Activated T-helper 1 cell treated with anti-CD3 and anti-CD28 coated beads, Interleukin-12 subunit alpha, Interleukin-12 subunit beta, Interleukin-2, Interleukin-4 antibody, amounts not matched to agents 30 ng/mL and 10 ng/mL and 1 ng/mL, durations not matched to agents 14 hours and 24 hours and 36 hours (primary cell): ENCODE measurements at regions of chr10 and their contacts with region 1.

Region 1: GRCh38 chr10:6920072-6921019 is 340.3 kb upstream of the PRKCQ start:
- DNase-seq: peak; percentile 71
- H3K4me3 Mint-ChIP-seq: no peak overlapping the region
- H3K27ac Mint-ChIP-seq: peak overlapping the region; percentile 26
- H3K4me1 Mint-ChIP-seq: peaks cover 35% of the 10 kb centered on the region
- H3K27me3 Mint-ChIP-seq: no peaks in the 10 kb centered on the region

Region 2: GRCh38 chr10:6416892-6417512 is 503.3 kb before region 1 on chr10:
- intact Hi-C with region 1: loop called (anchors 10 kb)
- DNase-seq: no peak
- H3K4me3 Mint-ChIP-seq: no peak overlapping the region
- H3K27ac Mint-ChIP-seq: no peak overlapping the region
- H3K4me1 Mint-ChIP-seq: peaks cover 8% of the 10 kb centered on the region
- H3K27me3 Mint-ChIP-seq: peaks cover 1% of the 10 kb centered on the region

Region 3: DNA sequence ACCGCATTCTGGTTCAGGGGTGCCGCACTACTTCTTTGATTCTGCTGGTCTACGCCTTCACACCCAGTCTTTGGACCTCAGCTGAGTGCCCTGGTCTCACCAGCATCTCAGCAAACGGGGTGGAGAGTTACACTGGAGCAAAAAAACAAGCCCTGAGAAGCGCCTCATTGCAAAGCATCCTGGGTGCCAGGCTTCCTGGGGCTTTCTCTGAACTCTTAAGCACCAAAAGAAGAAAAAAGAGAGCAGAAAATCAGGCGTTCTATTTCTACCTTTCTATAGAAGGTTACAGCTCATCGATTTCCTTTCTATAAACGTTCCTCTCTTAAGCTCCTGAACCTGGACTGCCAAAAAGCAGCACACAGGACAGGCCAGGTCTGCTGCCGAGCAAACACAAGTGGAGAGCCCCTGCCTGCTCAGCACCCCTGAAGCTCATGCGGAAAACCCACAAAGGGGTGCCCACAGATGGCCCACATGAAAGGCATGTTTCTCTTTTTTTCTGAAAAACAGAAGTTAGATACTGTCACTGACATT is 272.6 kb after region 1 on chr10:
- intact Hi-C with region 1: loop called (anchors 2 kb)
- DNase-seq: peak; percentile 68
- H3K4me3 Mint-ChIP-seq: peak overlapping the region; percentile 76
- H3K27ac Mint-ChIP-seq: peak overlapping the region; percentile 97
- H3K4me1 Mint-ChIP-seq: peaks cover 73% of the 10 kb centered on the region
- H3K27me3 Mint-ChIP-seq: peaks cover 1% of the 10 kb centered on the region

Region 4: GRCh38 chr10:7417103-7417623 is 496.8 kb after region 1 on chr10:
- intact Hi-C with region 1: loop called (anchors 1 kb)
- DNase-seq: no peak
- H3K4me3 Mint-ChIP-seq: no peak overlapping the region
- H3K27ac Mint-ChIP-seq: peak overlapping the region; percentile 32
- H3K4me1 Mint-ChIP-seq: peaks cover 46% of the 10 kb centered on the region
- H3K27me3 Mint-ChIP-seq: peaks cover 37% of the 10 kb centered on the region

Region 5: GRCh38 chr10:7787857-7788638 is 867.7 kb after region 1 on chr10 and contains the starts of genes ATP5F1C and KIN:
- intact Hi-C with region 1: loop called (anchors 10 kb)
- DNase-seq: peak; percentile 97
- H3K4me3 Mint-ChIP-seq: no peak within 1 kb of the TSS
- H3K27ac Mint-ChIP-seq: peak within 1 kb of the TSS; percentile 75
- H3K4me1 Mint-ChIP-seq: peaks cover 47% of the 10 kb centered on the region
- H3K27me3 Mint-ChIP-seq: no peaks in the 10 kb centered on the region
- total RNA-seq, gene ATP5F1C: 316 and 329 TPM in 2 replicates
- total RNA-seq, gene KIN: 11.0 and 12.3 TPM in 2 replicates